Psoas muscle (tissue), 8 donors: ENCODE measurements at regions of chr9 and their contacts with region 1.

Region 1: DNA sequence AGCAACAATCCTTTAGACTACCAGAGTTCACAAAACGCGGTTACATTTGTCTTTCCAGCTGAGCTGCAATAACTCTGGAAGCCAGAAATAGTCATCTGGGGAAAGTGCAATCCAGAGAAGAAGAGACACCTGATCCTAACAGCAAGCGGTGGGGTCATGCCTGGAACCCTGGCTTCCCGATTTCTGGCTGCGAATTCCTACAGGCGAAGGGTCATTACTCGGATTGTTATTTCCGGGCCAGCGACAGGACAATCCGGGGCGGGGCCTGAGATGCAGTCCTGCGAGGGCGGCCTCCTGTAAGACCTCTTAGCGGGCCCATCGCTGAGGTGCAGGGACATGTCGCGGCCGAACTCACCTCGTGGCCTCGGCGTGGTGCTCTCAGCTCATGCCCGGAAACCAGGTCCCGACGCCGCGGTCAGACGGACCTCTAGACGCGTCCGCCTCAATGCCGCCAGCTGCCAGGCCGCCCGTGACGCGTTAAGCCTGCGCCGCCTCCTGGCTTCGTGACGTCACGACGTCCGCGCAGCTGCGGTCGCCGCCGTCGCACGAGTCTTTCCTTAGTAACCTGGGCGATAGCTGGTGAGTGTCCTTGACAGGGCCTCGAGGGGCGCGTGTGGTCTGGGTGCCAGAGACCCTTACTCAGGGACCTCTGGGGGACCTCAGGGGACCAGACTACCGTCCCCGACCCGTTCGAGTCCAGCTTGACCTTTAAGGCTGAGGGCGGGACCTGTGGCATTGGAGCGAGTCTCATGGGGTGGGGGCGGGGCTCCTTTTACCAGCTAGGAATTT is at the starts of genes MRRF and RBM18:
- DNase-seq: peak; percentile 92 to 95
- ATAC-seq: peak; percentile 89 to 93 (median 90)
- H3K4me3 ChIP-seq: peak within 1 kb of the TSS; percentile 73
- H3K27ac ChIP-seq: peak within 1 kb of the TSS; percentile 93
- H3K4me1 ChIP-seq: peaks cover 49% of the 10 kb centered on the region
- H3K27me3 ChIP-seq: no peaks in the 10 kb centered on the region
- CTCF ChIP-seq: no peak
- total RNA-seq, gene MRRF: 23.5 to 50.9 (median 39.0) TPM
- total RNA-seq, gene RBM18: 33.7 to 41.7 (median 37.7) TPM

Region 2: GRCh38 chr9:122159026-122159924 is 105.3 kb before region 1 on chr9 and contains the starts of genes MORN5 and NDUFA8:
- intact Hi-C with region 1: loop called in 1 of 2 experiments (anchors 1 kb)
- DNase-seq: peak; percentile 97 to 98
- ATAC-seq: peak; percentile 97 to 99 (median 98)
- H3K4me3 ChIP-seq: peak within 1 kb of the TSS; percentile 90
- H3K27ac ChIP-seq: peak within 1 kb of the TSS; percentile 87
- H3K4me1 ChIP-seq: peaks cover 40% of the 10 kb centered on the region
- H3K27me3 ChIP-seq: no peaks in the 10 kb centered on the region
- CTCF ChIP-seq: peak; percentile 15
- total RNA-seq, gene MORN5: not detected
- total RNA-seq, gene NDUFA8: 78.9 to 148 (median 124) TPM